ENCODE measurements at regions of chr10 and their contacts with region 1.

Region 1: DNA sequence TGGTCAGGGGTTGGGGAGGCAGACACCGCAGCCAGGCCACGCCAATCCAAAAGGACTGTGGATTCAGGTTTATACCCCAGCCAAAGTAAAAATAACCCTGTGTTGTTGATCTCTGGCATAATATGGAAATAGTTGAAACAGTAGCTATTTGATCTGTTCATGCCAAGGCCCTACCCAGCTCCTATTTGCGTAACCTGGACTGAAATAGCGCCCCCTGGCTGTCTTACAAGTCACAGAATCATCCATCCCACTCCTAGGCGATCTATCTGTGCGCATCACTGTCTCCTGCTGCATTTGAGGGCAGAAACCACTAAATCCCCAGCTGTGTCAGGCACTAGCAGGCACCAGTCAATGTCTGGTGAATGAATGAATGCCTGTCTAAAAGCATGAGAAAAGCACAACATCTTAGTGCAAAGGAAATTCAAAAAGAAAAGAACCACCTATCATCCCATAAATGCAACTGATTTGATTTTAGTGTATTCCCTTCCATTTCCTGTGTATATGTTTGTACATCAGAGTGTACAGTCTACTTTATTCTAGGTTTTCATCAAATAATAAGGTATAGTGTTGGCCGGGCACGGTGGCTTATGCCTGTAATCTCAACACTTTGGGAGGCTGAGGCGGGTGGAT is 160.0 kb downstream of the SLIT1 start:
- DNase-seq: peak; percentile 20
- H3K4me3 ChIP-seq: no peak overlapping the region
- H3K27ac ChIP-seq: no peak overlapping the region
- H3K4me1 ChIP-seq: no peaks in the 10 kb centered on the region
- H3K27me3 ChIP-seq: peaks cover 1% of the 10 kb centered on the region
- CTCF ChIP-seq: peak; percentile 55 to 70

Region 2: DNA sequence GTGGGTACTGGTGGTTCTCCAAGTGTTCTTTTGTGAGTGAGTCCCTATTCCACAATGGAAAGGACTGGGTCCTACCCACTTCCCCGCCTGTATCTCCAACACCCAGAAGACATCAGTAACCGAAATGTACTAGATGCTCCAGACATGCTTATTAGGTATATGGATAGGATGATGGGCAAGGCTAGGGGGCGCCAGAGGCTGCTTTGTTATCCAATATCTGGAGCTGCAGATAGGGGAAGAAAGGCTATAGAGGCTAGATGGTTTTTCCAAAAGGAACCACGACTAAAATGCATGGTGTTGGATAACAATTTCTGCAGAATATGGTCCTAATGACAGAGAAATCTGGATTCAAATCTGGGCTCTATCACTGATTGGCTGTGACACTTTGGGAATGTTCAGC is 382.8 kb before region 1 on chr10:
- CTCF ChIA-PET with region 1: no interaction called
- dilution Hi-C with region 1: no loop called
- in situ Hi-C with region 1: no loop called
- intact Hi-C with region 1: loop called (anchors 2 kb)
- DNase-seq: no peak
- H3K4me3 ChIP-seq: no peak overlapping the region
- H3K27ac ChIP-seq: no peak overlapping the region
- H3K4me1 ChIP-seq: no peaks in the 10 kb centered on the region
- H3K27me3 ChIP-seq: no peaks in the 10 kb centered on the region
- CTCF ChIP-seq: peak; percentile 39 to 53

Region 3: DNA sequence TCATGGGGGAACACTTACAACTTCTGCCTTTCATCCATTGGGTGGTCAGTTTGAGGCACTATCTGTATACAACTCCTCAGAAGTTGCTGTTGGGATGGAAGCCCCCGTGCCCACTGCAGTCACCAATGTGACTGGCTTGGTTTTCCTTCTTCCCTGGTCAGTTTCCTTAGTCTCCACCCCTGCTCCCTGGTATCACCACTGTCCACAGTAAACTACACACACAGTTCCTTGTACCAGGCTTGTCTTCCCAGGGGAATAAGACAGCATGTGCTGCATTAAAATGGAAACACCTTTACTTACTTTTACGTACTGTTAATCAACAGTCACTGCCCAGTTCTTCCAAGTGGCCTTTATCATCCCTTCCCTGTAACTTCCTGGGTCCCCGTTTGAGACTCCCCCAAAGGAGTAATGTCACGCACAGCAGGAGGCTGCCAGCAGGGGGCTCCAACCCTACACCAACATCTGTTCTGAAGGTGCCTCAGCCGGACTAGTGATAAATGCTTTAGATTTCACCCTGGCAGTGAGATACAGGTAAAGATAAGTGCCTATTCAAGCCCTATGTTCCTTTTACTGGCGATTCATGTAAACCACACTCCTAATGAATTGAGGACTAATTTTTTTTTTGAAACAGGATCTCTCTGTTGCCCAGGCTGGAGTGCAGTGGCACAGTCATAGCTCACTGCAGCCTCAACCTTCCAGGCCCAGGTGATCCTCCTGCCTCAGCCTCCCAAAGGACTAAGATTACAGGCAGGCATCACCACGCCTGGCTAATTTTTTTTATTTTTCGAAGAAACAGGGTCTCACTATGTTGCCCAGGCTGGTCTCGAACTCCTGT is 260.1 kb before region 1 on chr10:
- CTCF ChIA-PET with region 1: interaction called, 11 read pairs
- dilution Hi-C with region 1: no loop called
- in situ Hi-C with region 1: no loop called
- intact Hi-C with region 1: loop called (anchors 1 kb)
- DNase-seq: peak; percentile 47
- H3K4me3 ChIP-seq: no peak overlapping the region
- H3K27ac ChIP-seq: no peak overlapping the region
- H3K4me1 ChIP-seq: no peaks in the 10 kb centered on the region
- H3K27me3 ChIP-seq: no peaks in the 10 kb centered on the region
- CTCF ChIP-seq: peak; percentile 86 to 91

Region 4: GRCh38 chr10:96910488-96911395 is 115.0 kb before region 1 on chr10:
- CTCF ChIA-PET with region 1: no interaction called
- dilution Hi-C with region 1: no loop called
- in situ Hi-C with region 1: no loop called
- intact Hi-C with region 1: loop called (anchors 1 kb)
- DNase-seq: peak; percentile 8
- H3K4me3 ChIP-seq: no peak overlapping the region
- H3K27ac ChIP-seq: no peak overlapping the region
- H3K4me1 ChIP-seq: no peaks in the 10 kb centered on the region
- H3K27me3 ChIP-seq: no peaks in the 10 kb centered on the region
- CTCF ChIP-seq: peak; percentile 70 to 71

Region 5: GRCh38 chr10:96991313-96991841 is 34.4 kb before region 1 on chr10:
- CTCF ChIA-PET with region 1: no interaction called
- dilution Hi-C with region 1: no loop called
- in situ Hi-C with region 1: no loop called
- intact Hi-C with region 1: no loop called
- DNase-seq: peak; percentile 57
- H3K4me3 ChIP-seq: no peak overlapping the region
- H3K27ac ChIP-seq: peak overlapping the region; percentile 5
- H3K4me1 ChIP-seq: peaks cover 8% of the 10 kb centered on the region
- H3K27me3 ChIP-seq: no peaks in the 10 kb centered on the region
- CTCF ChIP-seq: no peak